SK-N-SH (cell line): ENCODE measurements at regions of chr9 and their contacts with region 1.

Region 1: GRCh38 chr9:91775011-91775707 is 174.9 kb downstream of the ROR2 start:
- DNase-seq: peak; percentile 86
- H3K4me3 ChIP-seq: peak overlapping the region in 1 of 2 experiments; percentile 49; a peak in 1 of 4 replicates
- H3K27ac ChIP-seq: no peak overlapping the region
- H3K4me1 ChIP-seq: peaks cover 0 to 37% of the 10 kb centered on the region in 2 experiments; a peak in 1 of 4 replicates
- H3K27me3 ChIP-seq: peaks cover 37% of the 10 kb centered on the region; the same call in 1 of the 2 replicates
- CTCF ChIP-seq: peak; percentile 73
- EP300 ChIP-seq: no peak
- RAD21 ChIP-seq: peak; percentile 91

Region 2: GRCh38 chr9:91758491-91758981 is 16.6 kb before region 1 on chr9:
- CTCF ChIA-PET with region 1: interaction called, 73 read pairs
- POLR2A ChIA-PET with region 1: no interaction called
- DNase-seq: peak; percentile 73
- H3K4me3 ChIP-seq: peak overlapping the region in 1 of 2 experiments; percentile 12; a peak in 1 of 4 replicates
- H3K27ac ChIP-seq: no peak overlapping the region; a peak in 1 of 4 replicates
- H3K4me1 ChIP-seq: peaks cover 0 to 9% of the 10 kb centered on the region in 2 experiments; a peak in 1 of 4 replicates
- H3K27me3 ChIP-seq: no peaks in the 10 kb centered on the region
- CTCF ChIP-seq: peak; percentile 58
- EP300 ChIP-seq: no peak
- RAD21 ChIP-seq: peak; percentile 68

Region 3: DNA sequence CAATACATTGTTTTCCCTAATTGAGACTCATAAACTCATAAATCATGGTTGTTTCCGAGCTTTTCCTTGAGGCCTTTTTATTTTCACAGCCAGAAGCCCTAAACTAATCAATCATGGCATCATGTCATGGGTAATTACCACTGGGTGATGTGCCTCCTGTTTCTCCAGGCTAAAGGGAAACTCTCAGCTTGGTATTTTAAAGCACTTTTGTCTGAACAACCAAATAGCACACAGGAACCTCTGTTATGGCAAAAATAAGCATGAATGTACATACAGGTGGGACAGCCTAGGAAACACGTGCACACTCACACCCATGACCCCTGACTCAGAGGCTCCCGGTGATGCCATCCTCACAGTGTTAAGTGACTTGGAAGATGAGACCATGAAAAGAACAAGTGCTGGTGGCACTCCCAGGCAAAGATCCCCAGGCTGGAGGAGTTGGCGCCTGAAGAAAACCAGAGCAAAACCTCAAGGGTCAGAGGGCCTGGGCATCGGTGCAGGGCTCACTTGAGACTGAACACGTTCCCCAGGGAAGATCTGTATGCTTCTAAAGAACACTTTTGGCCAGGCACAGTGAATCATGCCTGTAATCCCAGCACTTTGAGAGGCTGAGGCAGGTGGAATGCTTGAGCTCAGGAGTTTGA is 20.6 kb after region 1 on chr9:
- CTCF ChIA-PET with region 1: interaction called, 16 read pairs
- POLR2A ChIA-PET with region 1: interaction called, 3 read pairs
- DNase-seq: no peak
- H3K4me3 ChIP-seq: no peak overlapping the region
- H3K27ac ChIP-seq: no peak overlapping the region
- H3K4me1 ChIP-seq: peaks cover 0 to 14% of the 10 kb centered on the region in 2 experiments; a peak in 2 of 4 replicates
- H3K27me3 ChIP-seq: no peaks in the 10 kb centered on the region
- CTCF ChIP-seq: no peak
- EP300 ChIP-seq: no peak
- RAD21 ChIP-seq: no peak

Region 4: DNA sequence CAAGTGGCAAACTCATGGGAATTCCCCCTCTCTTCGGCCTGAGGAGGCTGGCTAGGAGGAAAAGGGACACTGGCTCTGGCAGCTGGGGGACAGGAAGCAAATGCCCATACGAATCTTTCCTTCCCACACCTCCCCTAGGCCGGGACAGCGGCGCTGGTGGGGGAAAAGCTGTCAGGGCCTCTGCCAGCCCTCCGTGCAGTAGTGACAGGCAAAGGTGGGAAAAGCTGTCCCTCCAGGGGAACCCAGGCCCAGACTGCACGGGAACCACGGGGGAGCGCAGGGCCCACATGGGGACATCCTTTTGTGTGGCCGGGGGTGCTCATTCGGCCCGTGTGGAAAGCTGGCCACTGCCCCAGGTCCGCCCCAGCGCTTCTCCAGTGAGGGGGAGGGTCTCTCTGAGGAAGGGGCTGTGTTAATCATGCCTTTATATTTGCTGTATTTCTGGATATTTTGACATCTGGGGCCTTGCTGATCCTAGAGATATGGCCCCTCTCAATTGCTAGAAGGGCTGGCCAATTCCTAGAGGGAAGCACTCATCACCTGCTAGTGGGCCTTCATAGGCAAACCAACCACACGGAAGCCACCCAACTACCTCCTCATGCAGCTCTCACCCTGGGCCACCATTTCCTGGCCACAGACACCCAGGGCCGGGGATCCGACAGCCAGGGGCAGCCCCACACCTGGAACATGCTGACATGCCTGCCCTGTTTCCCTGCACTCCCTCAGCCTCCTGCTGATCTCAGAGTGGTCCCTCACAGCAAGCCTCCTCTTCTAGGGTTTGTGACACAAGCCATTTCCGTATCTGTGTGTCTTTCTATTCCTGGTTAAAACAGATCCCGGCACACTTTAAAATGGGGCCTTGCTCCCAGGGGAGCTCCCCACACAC is 36.1 kb after region 1 on chr9:
- CTCF ChIA-PET with region 1: interaction called, 11 read pairs
- POLR2A ChIA-PET with region 1: no interaction called
- DNase-seq: peak; percentile 63
- H3K4me3 ChIP-seq: no peak overlapping the region
- H3K27ac ChIP-seq: no peak overlapping the region; a peak in 1 of 4 replicates
- H3K4me1 ChIP-seq: peaks cover 0 to 24% of the 10 kb centered on the region in 2 experiments; a peak in 1 of 4 replicates
- H3K27me3 ChIP-seq: no peaks in the 10 kb centered on the region
- CTCF ChIP-seq: no peak
- EP300 ChIP-seq: no peak
- RAD21 ChIP-seq: no peak

Region 5: GRCh38 chr9:92010705-92011536 is 235.8 kb after region 1 on chr9:
- CTCF ChIA-PET with region 1: no interaction called
- POLR2A ChIA-PET with region 1: no interaction called
- DNase-seq: no peak
- H3K4me3 ChIP-seq: no peak overlapping the region
- H3K27ac ChIP-seq: no peak overlapping the region
- H3K4me1 ChIP-seq: no peaks in the 10 kb centered on the region
- H3K27me3 ChIP-seq: no peaks in the 10 kb centered on the region
- CTCF ChIP-seq: no peak
- EP300 ChIP-seq: no peak
- RAD21 ChIP-seq: no peak